MCF 10A (cell line): ENCODE measurements at regions of chr3 and their contacts with region 1.

Region 1: DNA sequence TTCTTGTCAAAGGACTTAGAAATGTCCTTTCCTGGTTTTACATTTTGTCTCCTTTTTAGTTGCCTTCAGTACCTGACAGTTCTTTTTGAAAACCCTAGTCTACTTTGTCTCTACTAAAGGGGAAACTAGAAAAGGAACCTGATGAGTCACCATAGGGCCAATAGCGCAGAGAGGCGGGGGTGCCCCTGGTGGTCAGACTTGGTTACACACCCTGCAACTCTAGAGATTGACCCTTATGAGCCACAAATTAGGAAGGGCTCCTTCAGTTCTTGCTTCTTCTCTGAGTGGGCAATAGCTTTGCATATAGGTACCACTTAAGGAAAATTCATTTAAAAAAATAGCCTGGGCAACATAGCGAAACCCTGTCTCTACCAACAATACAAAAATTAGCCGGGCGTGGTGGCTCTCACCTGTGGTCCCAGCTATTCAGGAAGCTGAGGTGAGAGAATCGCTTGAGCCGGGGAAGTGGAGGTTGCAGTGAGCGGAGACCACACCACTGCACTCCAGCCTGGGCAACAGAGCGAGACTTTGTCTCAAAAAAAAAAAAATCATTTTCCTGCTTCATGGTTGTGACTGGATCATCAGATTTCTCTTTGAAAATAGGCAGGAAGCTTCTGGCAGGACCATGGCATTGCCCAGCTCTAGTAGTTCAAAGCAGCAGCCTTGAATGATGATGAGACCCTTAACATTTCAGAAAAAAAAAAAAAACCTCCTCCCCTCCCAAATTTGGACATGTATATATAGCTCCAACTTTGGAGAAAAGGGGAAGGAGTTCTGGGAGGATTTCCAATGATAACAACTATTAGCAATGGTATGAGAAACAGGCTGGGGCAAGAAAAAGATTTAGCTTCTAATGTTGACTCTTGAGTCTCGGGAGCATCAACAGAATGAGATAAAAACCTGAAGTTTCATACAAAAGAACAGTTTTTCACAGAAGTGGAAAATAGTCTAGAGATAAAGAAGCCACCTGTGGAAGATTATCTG is 45.2 kb upstream of the RASA2 start:
- DNase-seq: peak; percentile 77
- H3K4me3 Mint-ChIP-seq: no peak overlapping the region
- H3K27ac Mint-ChIP-seq: peak overlapping the region; percentile 64
- H3K4me1 Mint-ChIP-seq: peaks cover 18% of the 10 kb centered on the region
- H3K27me3 Mint-ChIP-seq: no peaks in the 10 kb centered on the region
- CTCF ChIP-seq: peak; percentile 84

Region 2: GRCh38 chr3:141370065-141370533 is 71.6 kb before region 1 on chr3:
- CTCF ChIA-PET with region 1: interaction called, 10 read pairs
- POLR2A ChIA-PET with region 1: interaction called, 43 read pairs
- intact Hi-C with region 1: no loop called
- DNase-seq: peak; percentile 93
- H3K4me3 Mint-ChIP-seq: peak overlapping the region; percentile 73
- H3K27ac Mint-ChIP-seq: peak overlapping the region; percentile 98
- H3K4me1 Mint-ChIP-seq: peaks cover 56% of the 10 kb centered on the region
- H3K27me3 Mint-ChIP-seq: no peaks in the 10 kb centered on the region
- CTCF ChIP-seq: no peak

Region 3: DNA sequence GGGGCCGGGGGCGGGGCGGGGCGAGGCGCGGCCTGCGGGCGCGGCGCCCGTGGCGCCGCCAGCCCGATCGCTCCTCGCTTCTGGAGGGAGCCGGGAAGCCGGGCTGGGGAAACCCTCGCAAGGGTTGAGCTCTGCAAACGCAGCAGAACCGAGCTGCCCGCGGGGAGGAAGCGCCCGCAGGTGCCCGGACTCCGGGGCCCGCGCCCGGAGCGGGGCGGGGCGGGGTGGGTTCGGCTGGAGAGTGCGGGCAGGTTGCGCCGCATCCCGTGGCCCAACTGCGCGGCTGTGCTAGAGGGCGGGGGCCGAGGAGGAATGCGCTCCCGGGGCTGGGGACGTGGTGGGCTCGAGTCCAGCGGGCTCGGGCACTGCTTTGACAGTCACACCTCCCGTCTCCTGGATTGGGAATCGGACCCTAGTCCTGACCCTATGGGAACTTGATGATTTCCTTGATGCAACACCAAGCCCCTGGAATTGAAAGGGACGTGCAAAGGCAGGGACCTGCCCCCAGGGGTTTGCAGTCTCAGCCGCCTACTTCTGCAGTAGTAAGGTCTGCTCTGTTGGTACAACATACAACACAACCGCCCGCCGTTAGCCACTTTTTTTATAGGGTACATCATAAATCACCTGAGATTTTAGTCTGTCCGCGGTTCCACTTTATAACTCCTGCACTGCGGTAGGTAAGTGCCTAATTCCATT is 39.0 kb before region 1 on chr3:
- CTCF ChIA-PET with region 1: interaction called, 10 read pairs
- POLR2A ChIA-PET with region 1: interaction called, 7 read pairs
- intact Hi-C with region 1: no loop called
- DNase-seq: peak; percentile 60
- H3K4me3 Mint-ChIP-seq: peak overlapping the region; percentile 69
- H3K27ac Mint-ChIP-seq: peak overlapping the region; percentile 94
- H3K4me1 Mint-ChIP-seq: peaks cover 56% of the 10 kb centered on the region
- H3K27me3 Mint-ChIP-seq: no peaks in the 10 kb centered on the region
- CTCF ChIP-seq: no peak

Region 4: GRCh38 chr3:141412087-141412935 is 29.4 kb before region 1 on chr3:
- CTCF ChIA-PET with region 1: interaction called, 10 read pairs
- POLR2A ChIA-PET with region 1: interaction called, 6 read pairs
- intact Hi-C with region 1: no loop called
- DNase-seq: peak; percentile 89
- H3K4me3 Mint-ChIP-seq: peak overlapping the region; percentile 58
- H3K27ac Mint-ChIP-seq: peak overlapping the region; percentile 95
- H3K4me1 Mint-ChIP-seq: peaks cover 47% of the 10 kb centered on the region
- H3K27me3 Mint-ChIP-seq: no peaks in the 10 kb centered on the region
- CTCF ChIP-seq: no peak

Region 5: GRCh38 chr3:141426404-141427034 is 15.2 kb before region 1 on chr3:
- CTCF ChIA-PET with region 1: interaction called, 109 read pairs
- POLR2A ChIA-PET with region 1: interaction called, 4 read pairs
- intact Hi-C with region 1: no loop called
- DNase-seq: peak; percentile 36
- H3K4me3 Mint-ChIP-seq: peak overlapping the region; percentile 9
- H3K27ac Mint-ChIP-seq: peak overlapping the region; percentile 55
- H3K4me1 Mint-ChIP-seq: peaks cover 9% of the 10 kb centered on the region
- H3K27me3 Mint-ChIP-seq: no peaks in the 10 kb centered on the region
- CTCF ChIP-seq: no peak

Region 6: GRCh38 chr3:141452036-141452435 is 10.4 kb after region 1 on chr3:
- CTCF ChIA-PET with region 1: interaction called, 83 read pairs
- POLR2A ChIA-PET with region 1: interaction called, 7 read pairs
- intact Hi-C with region 1: no loop called
- DNase-seq: peak; percentile 56
- H3K4me3 Mint-ChIP-seq: no peak overlapping the region
- H3K27ac Mint-ChIP-seq: no peak overlapping the region
- H3K4me1 Mint-ChIP-seq: peaks cover 26% of the 10 kb centered on the region
- H3K27me3 Mint-ChIP-seq: no peaks in the 10 kb centered on the region
- CTCF ChIP-seq: peak; percentile 50